Naive thymus-derived CD4-positive, alpha-beta T cell (primary cell): ENCODE measurements at regions of chr12 and their contacts with region 1.

Region 1: DNA sequence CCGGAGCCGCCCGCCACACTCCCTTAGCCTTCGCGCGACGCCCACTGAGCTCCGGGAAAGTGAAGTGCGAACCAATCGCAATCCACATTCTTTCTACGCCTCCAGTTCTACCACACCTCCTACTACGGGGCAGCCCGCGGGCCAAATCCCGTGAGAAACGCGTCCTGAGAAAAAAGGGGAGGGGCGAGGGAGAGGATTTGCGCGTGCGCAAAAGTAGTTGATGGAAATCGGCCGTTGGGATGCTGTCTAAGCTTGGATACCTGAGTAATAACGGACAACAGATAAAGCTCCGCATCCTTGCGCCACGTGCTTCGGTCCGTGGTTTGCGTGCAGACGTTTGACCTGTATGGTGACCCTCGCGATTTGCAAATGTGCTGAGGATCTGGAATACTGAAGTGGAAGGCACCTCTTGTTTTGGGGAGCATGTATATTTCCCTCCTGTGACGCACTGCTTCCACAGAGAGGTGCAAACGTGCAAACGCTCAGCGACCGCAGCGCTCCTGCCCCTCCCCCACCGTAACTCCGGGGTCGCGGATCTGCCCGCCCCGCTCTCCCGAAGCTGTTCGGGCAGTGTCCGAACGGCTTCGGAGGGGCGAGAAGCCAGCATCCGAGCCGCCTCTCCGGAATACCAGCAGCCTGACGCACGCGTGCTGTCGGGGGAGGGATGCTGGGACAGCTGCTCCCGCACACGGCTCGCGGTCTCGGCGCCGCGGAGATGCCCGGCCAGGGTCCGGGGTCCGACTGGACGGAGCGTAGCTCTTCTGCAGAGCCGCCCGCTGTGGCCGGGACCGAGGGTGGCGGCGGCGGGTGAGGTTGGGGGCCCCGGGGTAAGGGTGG is at the starts of genes FAM216A and GPN3:
- DNase-seq: peak; percentile 83 to 98 (median 98)
- ATAC-seq: peak; percentile 94
- H3K4me3 ChIP-seq: peak within 1 kb of the TSS; percentile 95
- H3K4me3 Mint-ChIP-seq: peak within 1 kb of the TSS; percentile 90 to 100 (median 96)
- H3K27ac ChIP-seq: peak within 1 kb of the TSS; percentile 90
- H3K27ac Mint-ChIP-seq: peak within 1 kb of the TSS; percentile 88 to 98 (median 95)
- H3K4me1 ChIP-seq: peaks cover 10 to 19% of the 10 kb centered on the region in 2 donors
- H3K4me1 Mint-ChIP-seq: peaks cover 20 to 68% (median 36%) of the 10 kb centered on the region in 7 donors
- H3K27me3 ChIP-seq: no peaks in the 10 kb centered on the region
- H3K27me3 Mint-ChIP-seq: no peaks in the 10 kb centered on the region
- total RNA-seq, gene FAM216A: 5.3 to 24.1 (median 23.0) TPM
- total RNA-seq, gene GPN3: 5.1 to 19.7 (median 14.6) TPM

Region 2: DNA sequence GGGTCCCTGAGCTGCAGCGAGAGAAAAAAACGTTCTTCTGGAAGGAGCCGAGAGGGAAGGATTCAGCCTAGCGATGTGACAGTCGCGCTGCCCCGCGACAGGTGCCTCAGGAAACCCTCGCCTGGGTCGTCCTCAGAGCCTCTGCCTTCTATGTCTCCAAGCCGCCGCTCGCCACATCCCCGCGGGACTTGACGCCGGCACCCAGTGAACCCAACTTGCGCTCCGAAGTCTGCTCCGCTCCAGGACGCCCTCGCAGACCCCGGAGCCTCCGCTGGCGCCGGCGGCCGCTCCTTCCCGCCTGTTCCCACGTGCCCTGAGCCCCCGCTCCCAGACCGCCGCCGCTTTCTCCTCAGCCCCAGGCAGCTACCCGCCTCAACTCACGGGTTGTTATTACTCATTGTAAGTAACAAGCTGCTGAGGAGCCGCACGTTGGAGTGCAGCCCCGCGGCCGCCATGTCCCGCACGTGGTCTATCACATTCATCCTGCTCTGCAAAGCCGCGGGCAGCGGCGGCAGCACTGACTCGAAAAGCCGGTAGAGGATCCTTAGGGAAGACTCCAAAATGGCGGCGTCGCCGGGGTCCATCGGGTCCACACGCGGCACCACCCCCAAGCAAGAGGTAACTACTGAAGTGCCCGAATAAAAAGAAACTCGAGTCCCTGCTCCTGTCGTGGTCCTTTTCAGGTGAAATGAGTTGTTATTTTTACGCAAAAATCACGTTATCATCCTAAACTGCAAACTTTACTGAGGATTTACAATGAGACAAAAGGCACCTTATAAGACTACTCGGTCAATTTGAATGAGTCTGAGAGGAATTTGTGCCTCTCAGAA is 65.1 kb before region 1 on chr12 and contains the start of gene ANAPC7:
- CTCF ChIA-PET with region 1: no interaction called
- POLR2A ChIA-PET with region 1: interaction called, 5 read pairs
- intact Hi-C with region 1: loop called in 1 of 2 experiments (anchors 1 kb)
- DNase-seq: peak; percentile 74 to 90 (median 87)
- ATAC-seq: peak; percentile 98
- H3K4me3 ChIP-seq: peak within 1 kb of the TSS; percentile 99
- H3K4me3 Mint-ChIP-seq: peak within 1 kb of the TSS in 9 of 10 donors; percentile 96 to 100 (median 98)
- H3K27ac ChIP-seq: peak within 1 kb of the TSS; percentile 81
- H3K27ac Mint-ChIP-seq: peak within 1 kb of the TSS; percentile 97 to 100 (median 99)
- H3K4me1 ChIP-seq: peaks cover 6 to 15% of the 10 kb centered on the region in 2 donors
- H3K4me1 Mint-ChIP-seq: peaks cover 15 to 50% (median 29%) of the 10 kb centered on the region in 7 donors
- H3K27me3 ChIP-seq: no peaks in the 10 kb centered on the region
- H3K27me3 Mint-ChIP-seq: no peaks in the 10 kb centered on the region
- total RNA-seq, gene ANAPC7: 40.9 to 71.7 (median 59.7) TPM

Region 3: DNA sequence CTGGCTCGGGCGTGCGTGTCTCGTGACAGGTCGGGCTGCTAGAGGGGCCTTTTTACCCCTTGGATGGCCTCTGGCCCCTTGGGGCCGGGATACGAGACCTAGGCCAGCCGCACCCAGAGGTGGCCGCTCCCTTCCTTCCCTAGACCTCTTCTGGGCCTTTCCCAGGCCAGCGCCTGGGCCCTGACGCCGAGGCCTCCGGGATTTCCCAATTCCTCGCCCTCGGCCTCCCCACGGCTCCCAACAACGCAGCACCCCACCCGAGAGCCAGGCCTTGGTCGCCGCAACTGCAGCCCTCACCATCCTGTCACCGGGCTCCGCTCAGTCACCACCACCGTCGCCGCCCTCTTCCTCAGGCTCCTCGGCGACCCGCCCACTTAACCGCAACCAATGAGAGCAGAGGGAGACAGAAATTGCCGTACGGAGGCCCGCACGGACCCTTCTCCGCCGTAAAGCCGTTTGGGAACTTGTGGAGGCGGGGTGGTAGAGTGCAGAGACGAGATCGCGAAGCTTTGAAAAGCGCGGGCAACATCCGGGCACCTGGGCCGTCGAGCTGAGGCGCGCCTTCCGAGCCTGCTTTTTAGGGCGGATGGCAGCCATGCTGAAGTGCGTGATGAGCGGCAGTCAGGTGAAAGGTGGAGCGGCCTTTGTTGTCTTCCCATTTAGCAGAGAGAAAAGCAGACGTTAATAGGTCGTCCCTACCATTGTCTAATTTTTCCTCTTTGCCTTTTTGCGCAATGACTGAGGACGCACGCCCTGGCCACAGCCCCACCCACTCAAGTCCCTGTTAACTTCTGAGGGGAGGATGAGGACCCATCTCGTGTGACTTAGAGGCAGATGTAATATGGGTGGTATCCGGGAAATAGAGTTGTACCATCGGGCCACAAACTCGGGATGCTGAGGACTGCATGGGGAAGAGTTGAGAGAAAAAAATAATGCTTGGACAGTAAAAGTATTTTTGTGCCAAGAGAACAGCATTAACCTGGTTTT is 33.6 kb after region 1 on chr12 and contains the starts of genes RAD9B and VPS29:
- CTCF ChIA-PET with region 1: interaction called, 20 read pairs
- POLR2A ChIA-PET with region 1: interaction called, 52 read pairs
- intact Hi-C with region 1: loop called (anchors 1 kb)
- DNase-seq: peak; percentile 91 to 100 (median 99)
- ATAC-seq: peak; percentile 98
- H3K4me3 ChIP-seq: peak within 1 kb of the TSS; percentile 86
- H3K4me3 Mint-ChIP-seq: peak within 1 kb of the TSS; percentile 88 to 100 (median 97)
- H3K27ac ChIP-seq: peak within 1 kb of the TSS; percentile 89
- H3K27ac Mint-ChIP-seq: peak within 1 kb of the TSS; percentile 93 to 100 (median 97)
- H3K4me1 ChIP-seq: peaks cover 20 to 22% of the 10 kb centered on the region in 2 donors
- H3K4me1 Mint-ChIP-seq: peaks cover 22 to 52% (median 39%) of the 10 kb centered on the region in 7 donors
- H3K27me3 ChIP-seq: no peaks in the 10 kb centered on the region
- H3K27me3 Mint-ChIP-seq: peaks cover 0 to 3% (median 0%) of the 10 kb centered on the region in 5 donors
- total RNA-seq, gene RAD9B: 0.60 to 2.9 (median 1.1) TPM
- total RNA-seq, gene VPS29: 78.5 to 131 (median 115) TPM

Region 4: GRCh38 chr12:110555577-110556406 is 87.4 kb after region 1 on chr12:
- CTCF ChIA-PET with region 1: interaction called, 7 read pairs
- POLR2A ChIA-PET with region 1: interaction called, 5 read pairs
- intact Hi-C with region 1: loop called (anchors 1 to 5 kb)
- DNase-seq: no peak
- ATAC-seq: no peak
- H3K4me3 ChIP-seq: no peak overlapping the region
- H3K4me3 Mint-ChIP-seq: peak overlapping the region in 3 of 10 donors; percentile 5 to 49 (median 18)
- H3K27ac ChIP-seq: no peak overlapping the region
- H3K27ac Mint-ChIP-seq: peak overlapping the region in 6 of 9 donors; percentile 1 to 77 (median 43)
- H3K4me1 ChIP-seq: peaks cover 0 to 18% of the 10 kb centered on the region in 2 donors
- H3K4me1 Mint-ChIP-seq: peaks cover 32 to 75% (median 63%) of the 10 kb centered on the region in 7 donors
- H3K27me3 ChIP-seq: no peaks in the 10 kb centered on the region
- H3K27me3 Mint-ChIP-seq: no peaks in the 10 kb centered on the region

Region 5: GRCh38 chr12:110600254-110600653 is 131.8 kb after region 1 on chr12:
- CTCF ChIA-PET with region 1: interaction called, 49 read pairs
- POLR2A ChIA-PET with region 1: interaction called, 30 read pairs
- intact Hi-C with region 1: loop called (anchors 1 kb)
- DNase-seq: peak in 7 of 9 donors; percentile 36 to 69 (median 56)
- ATAC-seq: peak; percentile 70
- H3K4me3 ChIP-seq: no peak overlapping the region
- H3K4me3 Mint-ChIP-seq: no peak overlapping the region
- H3K27ac ChIP-seq: no peak overlapping the region
- H3K27ac Mint-ChIP-seq: peak overlapping the region in 6 of 9 donors; percentile 6 to 63 (median 24)
- H3K4me1 ChIP-seq: no peaks in the 10 kb centered on the region
- H3K4me1 Mint-ChIP-seq: peaks cover 4 to 21% (median 15%) of the 10 kb centered on the region in 7 donors
- H3K27me3 ChIP-seq: no peaks in the 10 kb centered on the region
- H3K27me3 Mint-ChIP-seq: no peaks in the 10 kb centered on the region

Region 6: GRCh38 chr12:110689281-110690126 is 221.1 kb after region 1 on chr12:
- CTCF ChIA-PET with region 1: interaction called, 3 read pairs
- POLR2A ChIA-PET with region 1: interaction called, 10 read pairs
- intact Hi-C with region 1: loop called in 1 of 2 experiments (anchors 2 kb)
- DNase-seq: peak; percentile 20 to 62 (median 44)
- ATAC-seq: peak; percentile 69
- H3K4me3 ChIP-seq: peak overlapping the region; percentile 77
- H3K4me3 Mint-ChIP-seq: peak overlapping the region; percentile 84 to 98 (median 92)
- H3K27ac ChIP-seq: peak overlapping the region; percentile 66
- H3K27ac Mint-ChIP-seq: peak overlapping the region; percentile 65 to 96 (median 91)
- H3K4me1 ChIP-seq: peaks cover 13 to 14% of the 10 kb centered on the region in 2 donors
- H3K4me1 Mint-ChIP-seq: peaks cover 27 to 71% (median 55%) of the 10 kb centered on the region in 7 donors
- H3K27me3 ChIP-seq: no peaks in the 10 kb centered on the region
- H3K27me3 Mint-ChIP-seq: peaks cover 0 to 9% (median 0%) of the 10 kb centered on the region in 5 donors

Region 7: DNA sequence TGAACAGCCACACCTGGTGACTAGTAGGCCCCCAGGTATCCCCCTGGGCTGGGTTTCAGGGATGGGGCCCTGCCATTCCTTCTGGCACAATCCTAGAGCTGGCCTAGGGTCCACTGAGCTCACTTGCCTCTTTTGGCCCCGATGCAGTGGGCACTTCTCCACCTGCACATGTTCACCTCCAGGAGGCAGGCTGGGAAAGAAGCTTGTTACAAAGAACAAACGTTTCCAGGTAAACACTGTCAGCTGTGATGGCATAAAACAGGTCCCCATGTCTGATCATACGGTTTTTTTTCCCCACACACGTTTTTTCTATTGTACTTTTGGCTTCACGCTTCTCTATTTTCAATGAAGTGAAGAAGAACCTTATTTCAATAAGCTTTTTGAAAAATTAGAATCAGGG is 236.3 kb after region 1 on chr12:
- CTCF ChIA-PET with region 1: no interaction called
- POLR2A ChIA-PET with region 1: no interaction called
- intact Hi-C with region 1: no loop called
- DNase-seq: peak in 2 of 9 donors; percentile 23 to 25
- ATAC-seq: no peak
- H3K4me3 ChIP-seq: no peak overlapping the region
- H3K4me3 Mint-ChIP-seq: no peak overlapping the region
- H3K27ac ChIP-seq: no peak overlapping the region
- H3K27ac Mint-ChIP-seq: peak overlapping the region in 4 of 9 donors; percentile 0 to 63 (median 50)
- H3K4me1 ChIP-seq: no peaks in the 10 kb centered on the region
- H3K4me1 Mint-ChIP-seq: peaks cover 0 to 4% (median 0%) of the 10 kb centered on the region in 7 donors
- H3K27me3 ChIP-seq: no peaks in the 10 kb centered on the region
- H3K27me3 Mint-ChIP-seq: no peaks in the 10 kb centered on the region

Region 8: GRCh38 chr12:110888256-110888991 is 420.0 kb after region 1 on chr12:
- CTCF ChIA-PET with region 1: no interaction called
- POLR2A ChIA-PET with region 1: interaction called, 4 read pairs
- intact Hi-C with region 1: loop called in 1 of 2 experiments (anchors 5 kb)
- DNase-seq: no peak
- ATAC-seq: no peak
- H3K4me3 ChIP-seq: no peak overlapping the region
- H3K4me3 Mint-ChIP-seq: peak overlapping the region; percentile 51 to 97 (median 92)
- H3K27ac ChIP-seq: no peak overlapping the region
- H3K27ac Mint-ChIP-seq: peak overlapping the region in 5 of 9 donors; percentile 69 to 91 (median 77)
- H3K4me1 ChIP-seq: peaks cover 0 to 4% of the 10 kb centered on the region in 2 donors
- H3K4me1 Mint-ChIP-seq: peaks cover 0 to 8% (median 4%) of the 10 kb centered on the region in 7 donors
- H3K27me3 ChIP-seq: no peaks in the 10 kb centered on the region
- H3K27me3 Mint-ChIP-seq: peaks cover 0 to 12% (median 0%) of the 10 kb centered on the region in 5 donors